HEK293 (cell line): ENCODE measurements at regions of chr1 and their contacts with region 1.

Region 1: DNA sequence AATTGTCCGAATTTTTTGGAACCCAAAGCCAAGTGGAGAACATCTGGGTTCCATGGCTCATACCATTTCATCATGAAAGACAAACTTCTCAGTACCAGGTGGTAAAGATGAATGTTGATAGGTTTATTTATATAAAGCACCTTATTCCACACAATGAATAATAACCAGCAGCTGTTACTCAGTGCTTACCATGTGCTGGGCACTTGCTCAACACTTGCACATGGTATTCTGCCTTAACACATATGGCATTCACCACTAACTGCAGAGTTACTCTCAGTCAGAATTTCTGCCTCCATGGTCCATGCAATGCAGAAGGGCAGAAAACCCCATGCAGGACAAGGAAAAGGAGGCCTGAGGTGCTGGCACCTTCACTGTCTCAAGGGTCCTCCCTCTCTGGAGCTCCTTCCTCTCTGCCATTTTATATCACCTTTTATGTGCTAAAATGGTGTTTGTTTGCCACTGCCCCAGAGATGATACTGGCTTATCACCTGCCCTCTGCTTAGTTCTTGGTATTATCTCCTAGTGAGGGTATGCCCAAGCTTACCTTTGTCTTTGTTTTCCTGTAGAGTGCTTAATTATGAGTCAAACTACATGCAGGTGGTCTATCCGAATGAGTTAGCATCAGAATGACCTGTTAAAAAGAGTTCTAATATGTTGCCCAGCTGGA is 76.7 kb upstream of the ZNF326 start:
- H3K4me3 ChIP-seq: no peak overlapping the region
- H3K27ac ChIP-seq: no peak overlapping the region
- H3K4me1 ChIP-seq: no peaks in the 10 kb centered on the region
- CTCF ChIP-seq: no peak

Region 2: GRCh38 chr1:89905391-89906058 is 12.7 kb before region 1 on chr1:
- CTCF ChIA-PET with region 1: interaction called, 11 read pairs
- POLR2A ChIA-PET with region 1: no interaction called
- H3K4me3 ChIP-seq: no peak overlapping the region
- H3K27ac ChIP-seq: no peak overlapping the region
- H3K4me1 ChIP-seq: no peaks in the 10 kb centered on the region; the same call in 1 of the 2 replicates
- CTCF ChIP-seq: no peak